Activated naive CD4-positive, alpha-beta T cell treated with anti-CD3 and anti-CD28 coated beads for 36 hours (primary cell): ENCODE measurements at regions of chr3 and their contacts with region 1.

Region 1: GRCh38 chr3:51718547-51719409 is 11.9 kb downstream of the GRM2 start:
- DNase-seq: peak; percentile 87
- H3K4me3 Mint-ChIP-seq: no peak overlapping the region
- H3K27ac Mint-ChIP-seq: no peak overlapping the region
- H3K4me1 Mint-ChIP-seq: peaks cover 27% of the 10 kb centered on the region
- H3K27me3 Mint-ChIP-seq: no peaks in the 10 kb centered on the region

Region 2: DNA sequence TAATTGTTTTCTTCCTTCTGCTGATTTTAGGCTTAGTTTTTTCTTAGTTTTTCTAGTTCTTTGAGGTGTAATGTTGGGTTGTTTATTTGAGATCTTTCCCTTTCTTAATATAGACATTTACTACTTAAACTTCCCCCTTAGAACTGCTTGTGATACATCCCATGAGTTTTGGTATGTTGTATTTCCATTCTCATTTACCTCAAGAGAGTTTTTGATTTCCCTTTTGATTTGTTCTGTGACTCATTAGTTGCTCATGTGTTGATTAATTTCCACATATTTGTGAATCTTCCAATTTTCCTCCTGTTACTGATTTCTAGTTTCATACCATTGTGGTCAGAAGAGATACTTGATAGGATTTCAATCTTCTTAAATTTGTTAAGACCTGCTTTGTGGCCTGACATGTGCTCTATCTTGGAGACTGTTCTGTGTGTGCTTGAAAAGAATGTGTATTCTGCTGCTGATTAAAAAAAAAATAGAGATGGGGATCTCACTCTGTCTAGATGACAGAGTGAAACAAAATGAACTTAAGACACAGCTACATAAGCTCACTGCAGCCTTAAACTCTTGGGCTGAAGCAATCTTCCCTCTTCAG is 10.4 kb after region 1 on chr3:
- CTCF ChIA-PET with region 1: interaction called, 18 read pairs
- intact Hi-C with region 1: no loop called
- DNase-seq: no peak
- H3K4me3 Mint-ChIP-seq: no peak overlapping the region
- H3K27ac Mint-ChIP-seq: peak overlapping the region; percentile 9
- H3K4me1 Mint-ChIP-seq: peaks cover 32% of the 10 kb centered on the region
- H3K27me3 Mint-ChIP-seq: no peaks in the 10 kb centered on the region

Region 3: DNA sequence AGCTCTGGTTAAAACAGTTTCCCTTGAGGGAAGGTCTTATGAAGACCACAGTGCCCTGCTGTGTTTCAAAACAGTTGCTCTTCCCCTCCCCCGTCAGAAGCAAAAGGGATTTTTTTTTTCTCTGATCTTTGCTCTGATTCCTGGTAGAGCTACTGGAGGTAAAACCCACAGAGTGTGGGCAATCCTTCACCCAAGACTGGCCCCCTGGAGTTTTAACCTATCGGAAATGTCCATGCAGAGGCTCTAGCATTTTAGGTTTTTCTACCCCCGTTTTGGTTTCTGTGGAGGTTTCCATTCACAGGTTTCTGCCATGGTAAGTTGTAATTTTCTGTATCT is 15.8 kb after region 1 on chr3:
- CTCF ChIA-PET with region 1: interaction called, 18 read pairs
- intact Hi-C with region 1: no loop called
- DNase-seq: peak; percentile 52
- H3K4me3 Mint-ChIP-seq: peak overlapping the region; percentile 36
- H3K27ac Mint-ChIP-seq: peak overlapping the region; percentile 78
- H3K4me1 Mint-ChIP-seq: peaks cover 31% of the 10 kb centered on the region
- H3K27me3 Mint-ChIP-seq: peaks cover 3% of the 10 kb centered on the region

Region 4: GRCh38 chr3:51799879-51800749 is 81.3 kb after region 1 on chr3:
- CTCF ChIA-PET with region 1: interaction called, 38 read pairs
- intact Hi-C with region 1: loop called (anchors 1 kb)
- DNase-seq: peak; percentile 35
- H3K4me3 Mint-ChIP-seq: no peak overlapping the region
- H3K27ac Mint-ChIP-seq: no peak overlapping the region
- H3K4me1 Mint-ChIP-seq: peaks cover 22% of the 10 kb centered on the region
- H3K27me3 Mint-ChIP-seq: peaks cover 5% of the 10 kb centered on the region

Region 5: DNA sequence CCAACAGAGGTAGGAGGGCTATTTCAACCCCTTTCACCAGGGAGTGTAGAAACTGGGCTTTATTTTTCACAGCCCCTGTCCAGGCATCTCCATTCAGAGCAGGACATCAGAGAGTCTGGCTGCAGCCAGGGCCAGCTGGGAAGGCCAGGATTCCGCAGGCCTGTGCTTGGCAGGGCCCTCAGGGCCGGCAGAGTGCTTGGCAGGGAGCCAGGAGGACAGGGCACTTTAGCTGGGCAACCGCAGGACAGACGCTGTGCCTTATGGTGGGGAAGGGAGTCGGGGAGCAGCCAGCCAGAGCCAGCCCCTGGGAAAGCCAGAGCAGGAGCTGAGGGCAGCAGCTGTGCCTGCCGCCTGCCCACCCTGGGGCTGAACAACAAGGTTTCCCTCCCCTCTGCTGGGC is 94.8 kb after region 1 on chr3:
- CTCF ChIA-PET with region 1: no interaction called
- intact Hi-C with region 1: no loop called
- DNase-seq: no peak
- H3K4me3 Mint-ChIP-seq: no peak overlapping the region
- H3K27ac Mint-ChIP-seq: no peak overlapping the region
- H3K4me1 Mint-ChIP-seq: no peaks in the 10 kb centered on the region
- H3K27me3 Mint-ChIP-seq: peaks cover 6% of the 10 kb centered on the region